CD4-positive, alpha-beta T cell (primary cell): ENCODE measurements at regions of chr6 and their contacts with region 1.

Region 1: GRCh38 chr6:83490217-83490807 is 22.0 kb upstream of the PRSS35 start:
- DNase-seq: no peak
- ATAC-seq: no peak
- H3K4me3 ChIP-seq: no peak overlapping the region
- H3K4me3 Mint-ChIP-seq: no peak overlapping the region
- H3K27ac ChIP-seq: no peak overlapping the region
- H3K27ac Mint-ChIP-seq: no peak overlapping the region
- H3K4me1 ChIP-seq: no peaks in the 10 kb centered on the region
- H3K4me1 Mint-ChIP-seq: no peaks in the 10 kb centered on the region
- H3K27me3 ChIP-seq: no peaks in the 10 kb centered on the region
- H3K27me3 Mint-ChIP-seq: peaks cover 4% of the 10 kb centered on the region
- CTCF ChIP-seq: no peak

Region 2: GRCh38 chr6:83908813-83909212 is 418.5 kb after region 1 on chr6:
- CTCF ChIA-PET with region 1: no interaction called
- POLR2A ChIA-PET with region 1: no interaction called
- intact Hi-C with region 1: loop called in 1 of 2 experiments (anchors 10 kb)
- DNase-seq: no peak
- ATAC-seq: no peak
- H3K4me3 ChIP-seq: no peak overlapping the region
- H3K4me3 Mint-ChIP-seq: no peak overlapping the region
- H3K27ac ChIP-seq: no peak overlapping the region
- H3K27ac Mint-ChIP-seq: no peak overlapping the region
- H3K4me1 ChIP-seq: peaks cover 11% of the 10 kb centered on the region
- H3K4me1 Mint-ChIP-seq: peaks cover 42% of the 10 kb centered on the region
- H3K27me3 ChIP-seq: no peaks in the 10 kb centered on the region
- H3K27me3 Mint-ChIP-seq: no peaks in the 10 kb centered on the region
- CTCF ChIP-seq: no peak